PC-9 (cell line): ENCODE measurements at regions of chr6 and their contacts with region 1.

Region 1: DNA sequence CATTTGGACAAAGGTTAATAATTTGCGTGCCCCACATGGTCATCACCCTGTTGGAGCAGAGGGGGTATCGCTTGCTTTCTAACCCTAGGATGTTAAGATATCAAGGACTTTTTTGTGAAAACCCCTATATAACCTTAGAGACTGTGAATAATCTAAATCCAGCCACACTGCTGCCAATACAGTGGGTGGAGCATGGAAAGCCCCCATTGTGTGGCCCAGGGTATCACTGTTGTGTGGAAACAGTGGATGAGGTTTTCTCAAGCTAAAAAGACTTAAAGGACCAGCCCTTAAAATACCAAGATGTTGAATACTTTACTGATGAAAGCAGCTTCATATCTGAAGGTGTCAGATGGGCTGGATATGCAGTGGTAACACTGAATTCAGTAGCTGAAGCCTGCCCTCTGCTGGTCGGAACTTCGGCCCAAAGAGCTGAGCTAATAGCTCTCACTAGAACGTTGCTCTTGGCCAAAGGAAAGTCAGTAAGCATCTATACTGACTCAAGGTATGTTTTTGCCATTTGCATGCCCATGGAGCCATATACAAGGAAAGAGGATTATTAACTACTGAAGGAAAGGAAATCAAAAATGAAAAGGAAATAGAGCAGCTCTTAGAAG is 695.2 kb downstream of the PHF3 start:
- DNase-seq: peak; percentile 48 to 51
- H3K4me3 ChIP-seq: no peak overlapping the region
- H3K27ac ChIP-seq: no peak overlapping the region
- H3K4me1 ChIP-seq: no peaks in the 10 kb centered on the region
- H3K27me3 ChIP-seq: no peaks in the 10 kb centered on the region
- CTCF ChIP-seq: peak; percentile 73

Region 2: DNA sequence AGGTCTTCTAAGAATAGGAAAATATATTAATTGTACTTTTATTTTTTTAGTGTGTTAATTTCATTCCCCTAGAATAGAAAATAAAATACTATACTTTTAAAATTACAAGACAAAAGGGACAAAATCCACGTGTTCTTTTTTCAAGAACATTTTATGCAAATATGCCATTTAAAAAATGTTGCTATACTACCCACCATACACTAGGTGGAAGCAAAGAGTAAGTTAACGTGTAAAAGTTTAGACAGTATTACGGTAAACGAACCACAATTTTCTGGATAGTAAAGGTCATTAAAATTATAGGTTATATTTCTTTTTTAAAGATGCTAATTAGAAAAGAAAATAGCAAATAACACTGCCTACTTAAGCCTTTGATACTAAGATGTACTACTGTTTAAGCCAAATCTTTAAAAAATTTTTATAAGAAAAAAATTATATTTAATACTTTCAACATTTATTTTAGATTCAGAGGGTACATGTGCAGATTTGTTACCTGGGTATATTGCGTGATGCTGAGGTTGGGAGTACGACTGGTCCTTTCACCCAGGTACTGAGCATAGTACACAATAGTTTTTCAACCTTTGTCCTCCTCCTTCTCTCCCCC is 407.6 kb before region 1 on chr6:
- CTCF ChIA-PET with region 1: no interaction called
- POLR2A ChIA-PET with region 1: no interaction called
- intact Hi-C with region 1: loop called (anchors 2 kb)
- DNase-seq: no peak
- H3K4me3 ChIP-seq: no peak overlapping the region
- H3K27ac ChIP-seq: no peak overlapping the region
- H3K4me1 ChIP-seq: no peaks in the 10 kb centered on the region
- H3K27me3 ChIP-seq: no peaks in the 10 kb centered on the region
- CTCF ChIP-seq: peak; percentile 73

Region 3: DNA sequence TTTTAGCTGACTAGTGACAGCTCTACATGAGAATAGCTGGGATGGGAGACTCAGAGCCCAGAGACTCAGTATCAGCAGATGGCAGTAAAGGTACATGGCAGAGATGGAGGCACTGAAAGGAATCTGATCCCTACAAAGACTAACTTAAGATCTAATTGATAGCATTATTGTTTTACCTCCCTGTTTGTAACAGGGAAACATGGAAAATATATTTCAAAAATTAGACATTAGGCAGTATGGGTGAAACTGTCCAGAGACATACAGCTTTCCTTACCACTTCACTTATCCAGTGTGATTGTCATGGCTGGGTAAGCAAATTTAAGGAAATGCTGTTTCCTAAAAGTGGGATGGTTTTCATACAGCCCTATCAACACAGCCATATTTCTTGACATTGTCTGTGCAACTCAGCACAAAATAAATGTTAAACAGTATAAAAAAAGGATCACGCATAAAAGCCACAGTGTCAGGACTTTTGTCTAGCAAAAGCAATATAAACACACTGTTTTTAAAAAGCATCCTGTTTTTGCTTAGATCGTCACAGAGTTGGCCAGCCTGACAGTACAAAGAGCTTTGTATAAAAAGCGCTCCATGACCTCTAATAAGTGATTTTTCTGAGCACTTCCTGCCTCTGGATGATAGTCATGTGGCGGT is 318.3 kb before region 1 on chr6:
- CTCF ChIA-PET with region 1: no interaction called
- POLR2A ChIA-PET with region 1: no interaction called
- intact Hi-C with region 1: loop called (anchors 5 kb)
- DNase-seq: no peak
- H3K4me3 ChIP-seq: no peak overlapping the region
- H3K27ac ChIP-seq: no peak overlapping the region
- H3K4me1 ChIP-seq: no peaks in the 10 kb centered on the region
- H3K27me3 ChIP-seq: no peaks in the 10 kb centered on the region
- CTCF ChIP-seq: peak; percentile 60